GM10248 (cell line): ENCODE measurements at regions of chr6 and their contacts with region 1.

Region 1: GRCh38 chr6:26568601-26569432 is 27.9 kb upstream of the ABT1 start:
- DNase-seq: peak; percentile 82
- CTCF ChIP-seq: peak; percentile 38

Region 2: GRCh38 chr6:26342106-26343004 is 226.5 kb before region 1 on chr6:
- CTCF ChIA-PET with region 1: interaction called, 37 read pairs
- POLR2A ChIA-PET with region 1: interaction called, 3 read pairs
- DNase-seq: no peak
- CTCF ChIP-seq: no peak

Region 3: GRCh38 chr6:26457806-26458688 is 110.8 kb before region 1 on chr6 and contains the start of gene BTN2A1:
- CTCF ChIA-PET with region 1: no interaction called
- POLR2A ChIA-PET with region 1: no interaction called
- DNase-seq: peak; percentile 87
- CTCF ChIP-seq: no peak

Region 4: DNA sequence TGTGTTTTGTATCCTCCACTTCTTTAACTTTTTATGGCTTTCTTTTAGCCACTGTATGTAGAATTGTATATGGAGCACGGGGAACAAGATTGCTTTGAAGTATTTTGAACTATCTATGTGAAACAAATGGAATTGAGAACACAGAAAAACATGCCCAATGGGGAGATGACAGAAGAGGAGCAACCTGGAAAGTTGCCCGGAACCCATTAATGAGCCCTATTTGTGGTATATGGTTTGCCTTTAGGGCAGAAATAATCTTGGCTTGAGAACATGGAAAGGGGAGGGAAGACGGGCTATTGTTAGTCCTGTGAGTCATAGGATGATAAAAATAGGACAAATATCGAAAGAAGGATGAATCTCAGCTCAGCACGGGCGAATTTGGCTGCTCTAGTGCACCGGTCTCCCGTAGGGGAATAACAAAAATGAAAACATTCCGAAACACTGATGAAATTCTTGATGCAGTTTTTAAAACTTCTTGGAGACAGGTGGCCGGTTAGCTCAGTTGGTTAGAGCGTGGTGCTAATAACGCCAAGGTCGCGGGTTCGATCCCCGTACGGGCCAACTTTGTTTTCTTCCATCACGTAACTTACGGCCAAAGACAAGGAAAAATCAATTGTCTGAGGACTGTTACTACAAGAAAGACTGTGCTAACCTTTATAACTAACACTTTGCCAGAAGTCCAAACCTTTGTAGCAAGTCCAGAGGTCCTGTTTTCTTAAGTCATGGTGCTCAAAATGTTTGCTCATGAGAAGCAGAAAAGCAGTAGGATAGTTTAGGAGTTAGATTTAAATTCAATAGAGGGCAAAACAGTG is 15.0 kb before region 1 on chr6:
- CTCF ChIA-PET with region 1: interaction called, 19 read pairs
- POLR2A ChIA-PET with region 1: interaction called, 3 read pairs
- DNase-seq: no peak
- CTCF ChIP-seq: no peak